ENCODE measurements at regions of chr17 and their contacts with region 1.

Region 1: GRCh38 chr17:50200457-50201275 is 765 bp downstream of the COL1A1 start:
- DNase-seq: peak; percentile 94
- ATAC-seq: peak; percentile 84
- H3K4me3 ChIP-seq: peak overlapping the region; percentile 60
- H3K27ac ChIP-seq: peak overlapping the region; percentile 84
- H3K4me1 ChIP-seq: peaks cover 18% of the 10 kb centered on the region
- H3K27me3 ChIP-seq: peaks cover 13% of the 10 kb centered on the region
- CTCF ChIP-seq: peak; percentile 100

Region 2: DNA sequence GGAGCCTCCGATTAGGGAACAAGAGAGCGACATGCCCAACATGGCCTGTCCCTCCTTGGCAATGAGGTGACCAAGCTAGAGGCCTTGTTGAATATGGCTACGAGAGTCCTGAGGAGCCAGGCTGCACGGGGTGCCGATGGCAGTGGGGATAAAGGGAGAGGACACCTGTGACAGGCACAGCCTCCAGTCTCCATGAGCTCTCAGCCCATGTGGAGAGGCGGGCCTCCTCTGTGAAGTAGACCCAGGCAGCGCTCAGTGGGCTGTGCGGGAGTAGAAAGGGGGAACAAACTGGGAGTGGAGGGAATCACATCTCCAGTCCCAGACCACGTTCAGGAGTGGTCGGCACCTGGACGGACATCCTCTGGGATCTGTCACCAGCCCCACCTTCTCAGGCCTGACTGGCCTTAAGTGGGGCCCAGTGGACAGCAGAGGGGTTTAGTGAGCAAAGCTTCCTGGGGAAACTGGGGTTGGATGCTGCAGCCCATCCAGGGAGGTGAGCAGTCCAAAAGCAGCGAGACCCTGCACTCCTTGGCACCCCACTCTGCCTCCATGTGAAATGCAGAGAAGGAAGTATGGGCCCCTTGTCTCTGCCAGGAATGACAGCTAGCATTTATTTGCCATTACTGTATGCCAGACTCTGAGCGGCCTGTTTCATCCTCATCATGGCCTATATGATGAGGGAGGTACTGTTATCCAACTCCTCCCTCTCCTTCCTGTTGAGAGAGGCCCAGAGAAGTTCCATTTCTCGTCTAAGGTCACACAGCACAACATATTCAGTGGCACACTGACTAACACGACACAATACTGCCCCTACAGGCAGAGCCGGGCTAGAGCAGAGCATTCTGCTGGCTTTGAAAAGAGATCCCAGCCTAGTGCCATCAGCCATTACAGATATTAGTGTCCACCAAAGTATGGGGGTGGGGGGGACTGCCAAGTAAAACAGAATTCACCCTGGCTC is 69.1 kb after region 1 on chr17:
- intact Hi-C with region 1: loop called (anchors 5 kb)
- DNase-seq: peak; percentile 82
- ATAC-seq: peak; percentile 69
- H3K4me3 ChIP-seq: no peak overlapping the region
- H3K27ac ChIP-seq: peak overlapping the region; percentile 63
- H3K4me1 ChIP-seq: peaks cover 37% of the 10 kb centered on the region
- H3K27me3 ChIP-seq: peaks cover 7% of the 10 kb centered on the region
- CTCF ChIP-seq: peak; percentile 74

Region 3: DNA sequence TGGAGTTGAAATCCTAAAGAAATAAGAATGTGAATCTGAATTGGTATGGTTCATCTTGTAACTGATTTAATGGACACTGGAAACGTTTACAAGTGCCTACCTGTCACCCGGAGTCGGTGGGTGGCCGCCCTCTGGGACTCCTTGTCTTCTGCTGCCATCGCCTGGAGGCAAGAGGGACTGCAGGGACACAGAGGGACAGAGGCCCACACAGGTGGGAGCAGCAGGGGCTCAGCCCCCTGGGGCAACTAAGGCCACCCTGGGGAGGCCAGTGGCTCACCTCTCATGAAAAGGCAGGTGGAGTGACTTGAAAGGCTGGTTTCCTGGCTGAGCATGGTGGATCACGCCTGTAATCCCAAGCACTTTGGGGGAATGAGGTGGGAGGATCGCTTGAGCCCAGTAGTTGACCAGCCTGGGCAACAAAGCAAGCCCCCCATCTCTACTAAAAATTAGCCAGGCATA is 96.8 kb after region 1 on chr17:
- intact Hi-C with region 1: loop called (anchors 5 kb)
- DNase-seq: peak; percentile 89
- ATAC-seq: peak; percentile 99
- H3K4me3 ChIP-seq: no peak overlapping the region
- H3K27ac ChIP-seq: no peak overlapping the region
- H3K4me1 ChIP-seq: no peaks in the 10 kb centered on the region
- H3K27me3 ChIP-seq: no peaks in the 10 kb centered on the region
- CTCF ChIP-seq: peak; percentile 95

Measured in upper lobe of right lung (tissue), 1 donor.